ENCODE measurements at regions of chr4 and their contacts with region 1.

Region 1: DNA sequence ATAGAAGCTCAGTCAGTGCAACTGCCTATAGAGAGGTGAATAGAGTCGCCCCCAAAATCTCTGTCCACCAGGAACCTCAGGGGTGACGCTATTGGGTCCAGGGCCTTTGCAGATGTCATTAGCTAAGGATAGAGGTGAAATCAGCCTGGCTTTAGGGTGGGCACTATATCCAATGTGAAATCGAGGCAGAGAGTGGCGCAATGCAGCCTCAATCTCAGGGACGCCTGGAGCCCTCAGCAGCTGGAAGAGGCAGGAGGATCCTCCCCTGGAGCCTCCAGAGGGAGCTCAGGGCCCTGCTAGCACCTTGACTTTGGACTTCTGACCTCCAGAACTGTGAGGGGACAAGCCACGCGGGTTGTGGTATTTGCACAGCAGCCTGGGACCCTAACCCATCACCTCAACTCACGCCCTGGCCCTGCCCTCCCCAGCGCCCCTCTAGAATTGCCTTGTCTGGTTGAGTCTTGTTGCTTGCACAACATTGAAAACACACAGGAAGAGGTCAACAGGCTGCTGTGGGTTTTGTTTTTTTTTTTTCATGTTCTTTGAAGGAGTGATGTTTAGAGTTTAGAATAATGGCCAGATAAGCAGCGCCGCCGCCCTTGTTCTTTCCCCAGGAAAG is 89.4 kb upstream of the PSAPL1 start:
- DNase-seq: no peak
- H3K4me3 Mint-ChIP-seq: peak overlapping the region; percentile 23
- H3K27ac Mint-ChIP-seq: no peak overlapping the region
- H3K4me1 Mint-ChIP-seq: peaks cover 14% of the 10 kb centered on the region
- H3K27me3 Mint-ChIP-seq: peaks cover 19% of the 10 kb centered on the region

Region 2: DNA sequence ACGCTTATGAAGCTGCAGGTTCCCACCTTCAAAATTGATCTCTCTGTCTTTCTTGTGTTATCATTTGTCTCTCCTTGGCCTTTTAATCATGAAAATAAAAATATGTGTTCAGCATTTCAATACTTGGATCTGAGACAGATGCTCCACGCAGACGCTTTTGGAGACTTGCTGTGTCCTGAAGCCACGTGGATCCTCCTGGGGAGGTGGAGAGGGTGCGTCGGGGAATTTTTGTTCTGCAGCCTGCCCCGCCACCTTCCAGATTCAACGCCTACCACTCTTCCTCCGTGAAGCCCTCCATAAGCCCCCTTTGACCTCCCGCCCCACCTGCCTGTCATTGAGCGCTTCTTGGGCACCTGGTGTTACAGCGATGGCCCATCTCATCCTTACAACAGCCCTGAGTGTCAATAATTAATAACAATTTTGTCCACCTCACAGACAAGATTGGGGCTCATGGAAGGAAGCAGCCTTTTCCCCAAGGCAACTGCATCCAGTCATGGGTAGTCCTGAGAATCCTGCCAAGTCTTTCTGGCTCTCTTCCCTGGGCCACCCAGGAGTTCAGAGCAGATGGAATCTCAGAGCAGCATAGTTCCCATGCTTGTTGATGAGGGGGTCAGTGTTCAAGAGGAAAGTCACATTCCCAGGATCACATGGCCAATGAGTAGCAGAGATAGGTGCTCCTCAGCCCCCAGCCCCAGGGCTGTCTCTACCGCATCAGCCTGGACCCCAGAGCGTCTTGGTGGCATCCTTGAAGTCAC is 83.2 kb after region 1 on chr4:
- intact Hi-C with region 1: no loop called
- DNase-seq: no peak
- H3K4me3 Mint-ChIP-seq: no peak overlapping the region
- H3K27ac Mint-ChIP-seq: no peak overlapping the region
- H3K4me1 Mint-ChIP-seq: no peaks in the 10 kb centered on the region
- H3K27me3 Mint-ChIP-seq: no peaks in the 10 kb centered on the region

Region 3: DNA sequence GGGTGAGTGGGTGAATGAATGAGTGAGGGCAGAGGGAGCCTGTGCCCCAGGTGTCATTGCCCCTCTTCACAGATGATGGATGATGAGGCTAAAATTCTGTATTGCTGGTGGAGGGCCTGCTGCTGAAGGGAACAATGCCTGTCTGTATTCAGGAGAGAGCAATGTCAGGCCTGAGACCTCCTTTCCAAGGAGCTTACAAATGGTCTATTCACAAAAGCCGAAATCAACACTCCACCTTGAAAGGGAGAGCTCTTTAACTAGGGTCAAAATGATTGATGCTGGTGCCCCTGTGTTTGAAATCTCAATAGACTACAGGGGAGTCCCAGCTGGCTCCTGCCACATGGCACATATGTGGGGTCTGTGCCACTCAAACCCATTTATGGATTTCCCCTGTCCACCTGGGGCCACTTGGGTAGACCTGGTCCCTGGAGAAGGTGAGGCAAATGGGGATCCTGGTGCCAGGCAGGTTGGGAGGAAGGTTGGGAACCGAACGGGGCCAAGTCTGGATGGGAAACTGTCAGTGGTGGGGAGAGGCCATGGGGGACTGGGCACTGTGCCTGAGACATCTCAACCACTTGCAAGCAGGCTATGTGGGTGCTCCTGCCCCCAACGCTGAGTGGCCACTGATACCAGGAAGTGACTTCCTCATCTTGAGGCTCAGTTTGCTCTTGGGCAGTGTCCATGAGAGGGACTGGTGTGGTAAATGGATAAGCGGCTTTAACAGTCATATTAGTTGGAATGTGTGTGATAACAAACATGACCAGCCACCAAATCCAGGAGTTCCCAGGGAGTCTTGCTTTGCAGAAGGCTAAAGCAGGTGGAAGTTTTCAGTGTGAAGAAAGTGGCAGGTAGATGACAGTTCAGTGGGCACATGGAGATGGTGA is 134.4 kb after region 1 on chr4:
- intact Hi-C with region 1: no loop called
- DNase-seq: no peak
- H3K4me3 Mint-ChIP-seq: no peak overlapping the region
- H3K27ac Mint-ChIP-seq: no peak overlapping the region
- H3K4me1 Mint-ChIP-seq: peaks cover 2% of the 10 kb centered on the region
- H3K27me3 Mint-ChIP-seq: no peaks in the 10 kb centered on the region

Region 4: DNA sequence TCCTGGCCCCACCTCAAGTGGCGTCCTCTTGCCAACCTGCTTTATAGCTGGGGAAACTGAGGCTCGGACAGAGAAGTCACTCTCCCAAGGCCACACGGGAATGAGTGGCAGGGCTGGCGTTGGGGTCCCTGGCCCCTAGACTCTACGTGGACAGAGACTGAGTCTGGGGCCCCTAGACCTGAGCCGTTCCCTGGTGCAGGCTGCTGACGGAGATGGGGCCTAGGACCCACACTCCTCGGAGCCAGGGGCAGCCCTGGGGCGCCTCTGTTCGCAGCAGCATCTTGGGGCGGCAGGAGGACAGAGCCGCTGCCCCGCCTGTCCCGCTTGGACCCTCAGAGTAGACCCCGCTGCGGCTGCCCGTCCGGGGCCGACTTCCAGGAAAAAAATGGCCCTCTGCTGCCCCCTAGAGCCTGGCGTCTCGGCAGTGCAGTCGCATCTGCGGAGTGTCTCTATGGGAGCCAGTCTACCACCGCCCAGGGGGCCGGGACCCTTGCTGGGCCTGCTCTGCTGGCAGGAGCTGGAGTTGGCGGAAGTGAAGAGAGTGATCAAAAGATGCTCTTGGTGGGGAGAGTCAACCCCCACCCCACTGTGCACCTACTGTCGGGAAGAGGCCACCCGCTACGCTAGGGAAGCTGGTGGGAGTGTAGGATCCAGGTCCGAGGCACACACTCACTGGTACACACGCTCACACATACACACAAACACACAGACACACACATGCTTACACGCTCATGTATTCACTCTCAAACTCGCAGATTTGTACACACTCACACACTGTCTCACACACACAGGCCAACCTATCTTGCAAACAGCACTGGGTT is 195.4 kb after region 1 on chr4:
- intact Hi-C with region 1: loop called (anchors 10 kb)
- DNase-seq: peak; percentile 28
- H3K4me3 Mint-ChIP-seq: no peak overlapping the region
- H3K27ac Mint-ChIP-seq: no peak overlapping the region
- H3K4me1 Mint-ChIP-seq: no peaks in the 10 kb centered on the region
- H3K27me3 Mint-ChIP-seq: peaks cover 1% of the 10 kb centered on the region

Region 5: DNA sequence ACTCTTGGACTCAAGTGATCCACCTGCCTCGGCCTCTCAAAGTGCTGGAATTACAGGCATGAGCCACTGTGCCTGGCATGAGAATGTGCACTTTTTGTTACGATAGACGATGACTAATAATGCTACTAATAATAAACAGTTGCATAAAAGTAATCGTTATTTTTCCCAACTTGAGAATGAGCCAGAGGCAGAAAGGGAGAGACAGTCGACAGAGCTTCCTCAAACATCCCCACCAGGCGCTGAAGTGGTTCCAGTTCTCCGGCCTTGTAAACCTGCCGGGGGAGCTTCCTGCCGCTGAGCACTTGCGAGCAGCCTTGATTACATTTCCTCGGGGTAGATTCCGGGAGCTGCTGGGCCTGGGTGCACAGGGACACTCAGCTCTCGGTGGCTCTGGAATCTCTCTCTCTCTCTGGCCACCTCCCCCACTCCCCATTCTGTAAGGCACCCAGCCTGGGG is 736.5 kb after region 1 on chr4:
- intact Hi-C with region 1: no loop called
- DNase-seq: no peak
- H3K4me3 Mint-ChIP-seq: no peak overlapping the region
- H3K27ac Mint-ChIP-seq: no peak overlapping the region
- H3K4me1 Mint-ChIP-seq: no peaks in the 10 kb centered on the region
- H3K27me3 Mint-ChIP-seq: no peaks in the 10 kb centered on the region

Measured in activated T-helper 2 cell treated with anti-CD3 and anti-CD28 coated beads, Interferon-gamma antibody, Interleukin-2, Interleukin-4, amounts not matched to agents 10 μg/mL and 5 μg/mL and 100 μg/mL, durations not matched to agents 14 hours and 24 hours and 36 hours (primary cell).